GM18951 (cell line): ENCODE measurements at regions of chr5 and their contacts with region 1.

Region 1: DNA sequence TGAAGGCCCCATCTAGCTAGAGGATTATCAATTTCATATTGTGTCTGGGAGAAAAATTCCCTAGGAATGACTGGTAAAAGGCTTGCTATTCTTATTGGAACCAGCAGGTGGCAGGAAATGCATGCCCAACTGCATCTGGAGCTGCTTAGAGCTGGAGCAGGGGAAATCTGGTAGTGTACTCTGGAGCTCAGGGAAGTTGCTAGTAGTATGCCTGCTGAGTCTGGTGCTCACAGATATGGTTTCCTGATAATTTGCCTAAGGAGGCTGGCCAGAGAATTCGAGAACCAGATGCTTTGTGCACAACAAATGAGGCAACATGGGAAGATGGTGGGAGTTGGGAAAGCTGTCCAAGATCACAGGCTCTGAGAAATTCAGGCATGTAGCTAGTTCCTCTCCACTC is 53.7 kb downstream of the G3BP1 start:
- POLR2A ChIP-seq: no peak

Region 2: DNA sequence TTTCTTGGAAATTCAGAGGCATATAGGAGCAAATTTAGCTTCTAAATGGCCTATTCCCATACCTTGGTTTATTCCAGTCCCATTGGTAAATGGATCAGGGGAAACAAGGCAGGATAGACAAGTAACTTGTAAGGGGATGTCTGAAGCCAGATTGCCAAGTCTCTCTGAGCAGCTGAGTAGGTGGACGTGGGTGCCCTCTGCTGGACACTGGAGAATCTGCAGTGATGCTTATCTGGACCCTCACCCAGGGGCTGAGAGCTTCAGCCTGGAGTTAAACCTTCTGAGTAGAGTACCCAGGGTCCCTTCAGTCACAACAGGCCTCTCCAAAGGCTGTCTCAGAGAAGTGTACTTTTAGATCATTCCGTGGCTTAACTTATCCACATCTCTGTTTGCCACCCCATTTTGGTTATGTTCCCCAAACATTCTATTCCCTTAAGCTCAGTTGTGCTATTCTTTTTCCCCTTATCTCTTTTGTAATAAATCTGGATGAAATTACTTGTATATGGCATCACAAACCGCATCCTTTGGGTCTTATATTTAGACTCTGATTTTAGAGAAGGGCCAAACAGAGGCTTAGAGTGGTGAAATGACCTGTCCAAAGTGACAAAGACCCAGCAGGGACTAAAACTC is 317.5 kb after region 1 on chr5:
- in situ Hi-C with region 1: loop called (anchors 10 kb)
- POLR2A ChIP-seq: no peak

Region 3: DNA sequence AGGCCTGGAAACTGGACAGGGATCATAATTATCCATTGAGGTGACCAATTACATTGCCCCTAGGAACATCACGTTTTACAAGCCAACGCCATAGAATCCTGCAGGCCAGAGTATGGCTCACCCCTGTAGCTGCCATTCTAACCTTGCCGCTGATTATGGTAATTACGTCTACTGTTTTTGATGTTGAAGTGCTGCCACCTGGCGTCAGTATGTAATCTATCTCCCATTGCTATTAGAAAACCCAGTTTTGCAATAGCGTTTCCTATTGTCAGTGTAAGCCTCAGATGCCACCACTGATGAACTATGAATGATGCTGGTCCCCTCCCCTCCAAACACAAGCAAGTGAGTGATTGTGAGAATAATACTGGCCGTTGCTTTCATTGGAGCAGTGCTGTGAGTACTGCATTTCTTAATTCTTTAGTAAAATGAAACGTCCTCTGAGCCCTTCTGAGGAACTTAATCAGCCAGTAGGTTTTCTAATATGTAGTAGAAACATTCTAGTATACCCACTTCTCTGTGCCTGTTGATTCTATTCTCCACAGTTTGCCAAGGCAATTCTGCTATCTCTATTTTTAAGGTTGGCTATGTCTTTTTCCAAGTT is 680.1 kb after region 1 on chr5:
- in situ Hi-C with region 1: loop called (anchors 25 kb)
- POLR2A ChIP-seq: no peak